ENCODE measurements at regions of chr1 and their contacts with region 1.

Region 1: DNA sequence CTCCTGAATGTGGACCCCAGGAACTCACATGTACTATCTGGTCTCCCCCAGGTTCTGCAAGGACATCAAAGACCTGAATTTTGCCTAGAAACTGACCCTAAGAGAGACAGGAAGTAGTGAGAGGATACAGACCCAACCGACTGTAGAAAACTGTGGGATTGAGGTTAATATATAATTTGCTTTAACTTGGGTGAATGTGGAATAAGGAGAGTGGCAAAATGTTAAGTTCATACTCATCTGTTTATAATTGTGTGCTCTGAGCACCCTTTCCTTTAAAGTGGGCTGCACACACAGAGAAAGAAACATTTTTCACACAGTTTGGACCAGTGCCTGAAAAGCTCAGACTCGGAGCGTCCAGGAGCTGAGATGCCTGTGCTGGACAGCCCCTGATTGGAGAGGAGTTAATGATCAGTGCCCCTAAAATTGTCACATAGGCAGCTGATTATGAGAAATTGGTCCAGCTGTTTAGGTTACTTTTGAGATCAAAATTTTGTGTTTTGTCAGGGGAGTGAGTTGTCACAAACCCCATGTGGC is 37.2 kb downstream of the ROR1 start:
- DNase-seq: no peak
- CTCF ChIP-seq: no peak

Region 2: GRCh38 chr1:63643926-63644325 is 167.1 kb before region 1 on chr1:
- CTCF ChIA-PET with region 1: no interaction called
- POLR2A ChIA-PET with region 1: no interaction called
- DNase-seq: no peak
- CTCF ChIP-seq: no peak

Region 3: GRCh38 chr1:63787875-63788274 is 23.1 kb before region 1 on chr1:
- CTCF ChIA-PET with region 1: no interaction called
- POLR2A ChIA-PET with region 1: no interaction called
- DNase-seq: no peak
- CTCF ChIP-seq: no peak

Region 4: GRCh38 chr1:63821091-63822005 is 10.3 kb after region 1 on chr1:
- CTCF ChIA-PET with region 1: interaction called, 11 read pairs
- POLR2A ChIA-PET with region 1: no interaction called
- DNase-seq: no peak
- CTCF ChIP-seq: no peak

Region 5: DNA sequence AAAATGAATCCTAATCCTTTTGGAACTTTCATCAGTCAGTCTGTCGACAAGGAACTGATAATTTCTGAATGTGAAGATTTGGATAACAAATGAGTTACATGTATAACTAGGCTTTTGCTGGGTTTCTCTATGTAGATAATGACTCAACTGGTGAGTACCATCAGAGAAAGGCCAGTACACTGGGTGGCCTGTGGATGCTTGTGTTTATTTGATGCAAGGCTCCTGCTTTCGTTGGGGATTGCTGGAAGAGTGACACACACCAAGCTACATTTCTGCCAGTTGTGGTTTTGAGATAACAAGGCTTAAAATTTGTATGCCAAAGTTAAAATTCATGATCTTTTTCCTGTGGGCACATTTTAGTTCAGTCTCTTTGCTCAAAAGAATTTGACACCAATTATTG is 276.8 kb after region 1 on chr1:
- CTCF ChIA-PET with region 1: no interaction called
- POLR2A ChIA-PET with region 1: no interaction called
- DNase-seq: no peak
- CTCF ChIP-seq: no peak

Measured in GM10248 (cell line).